ENCODE measurements at regions of chr1 and their contacts with region 1.

Region 1: DNA sequence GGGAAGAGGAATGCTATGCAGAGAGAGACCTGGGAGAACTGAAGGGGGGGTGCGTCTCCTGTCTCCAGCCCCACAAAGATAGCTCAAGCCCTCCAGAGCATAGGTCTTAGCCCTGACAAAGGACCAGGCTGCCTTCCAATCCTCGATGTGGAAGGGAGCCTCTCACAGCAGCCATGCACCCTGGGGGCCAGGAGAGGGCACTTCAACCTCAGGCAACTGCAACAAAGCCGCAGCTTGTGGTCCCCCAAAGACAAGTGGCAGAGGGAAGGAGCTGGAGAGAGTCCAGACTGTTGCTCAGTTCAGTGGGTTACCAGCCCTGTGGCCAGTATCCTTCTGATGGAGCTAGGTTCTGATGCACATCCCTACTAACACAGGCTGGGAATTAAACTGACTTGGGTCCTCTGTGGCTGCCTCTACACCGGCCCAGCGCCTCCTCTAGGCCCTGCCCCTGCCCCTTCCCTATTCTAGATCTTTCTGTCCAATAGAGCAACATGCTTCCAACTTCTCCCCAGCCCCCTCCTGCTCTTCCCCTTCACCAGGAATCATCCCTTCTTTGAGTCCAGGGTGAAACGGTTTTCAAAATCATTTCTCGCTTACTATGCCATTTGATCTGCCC is 100.8 kb upstream of the SPATA6 start:
- DNase-seq: peak; percentile 58 to 87 (median 73)
- H3K4me3 ChIP-seq: no peak overlapping the region
- H3K27ac ChIP-seq: no peak overlapping the region
- H3K4me1 ChIP-seq: peaks cover 0 to under 1% of the 10 kb centered on the region in 2 donors
- H3K27me3 ChIP-seq: no peaks in the 10 kb centered on the region
- CTCF ChIP-seq: peak; percentile 48 to 85 (median 79)
- POLR2A ChIP-seq: no peak

Region 2: GRCh38 chr1:48422009-48422408 is 150.7 kb before region 1 on chr1:
- intact Hi-C with region 1: no loop called
- DNase-seq: no peak
- H3K4me3 ChIP-seq: no peak overlapping the region
- H3K27ac ChIP-seq: no peak overlapping the region
- H3K4me1 ChIP-seq: peaks cover 4 to 28% of the 10 kb centered on the region in 2 donors
- H3K27me3 ChIP-seq: no peaks in the 10 kb centered on the region
- CTCF ChIP-seq: no peak
- POLR2A ChIP-seq: no peak

Region 3: DNA sequence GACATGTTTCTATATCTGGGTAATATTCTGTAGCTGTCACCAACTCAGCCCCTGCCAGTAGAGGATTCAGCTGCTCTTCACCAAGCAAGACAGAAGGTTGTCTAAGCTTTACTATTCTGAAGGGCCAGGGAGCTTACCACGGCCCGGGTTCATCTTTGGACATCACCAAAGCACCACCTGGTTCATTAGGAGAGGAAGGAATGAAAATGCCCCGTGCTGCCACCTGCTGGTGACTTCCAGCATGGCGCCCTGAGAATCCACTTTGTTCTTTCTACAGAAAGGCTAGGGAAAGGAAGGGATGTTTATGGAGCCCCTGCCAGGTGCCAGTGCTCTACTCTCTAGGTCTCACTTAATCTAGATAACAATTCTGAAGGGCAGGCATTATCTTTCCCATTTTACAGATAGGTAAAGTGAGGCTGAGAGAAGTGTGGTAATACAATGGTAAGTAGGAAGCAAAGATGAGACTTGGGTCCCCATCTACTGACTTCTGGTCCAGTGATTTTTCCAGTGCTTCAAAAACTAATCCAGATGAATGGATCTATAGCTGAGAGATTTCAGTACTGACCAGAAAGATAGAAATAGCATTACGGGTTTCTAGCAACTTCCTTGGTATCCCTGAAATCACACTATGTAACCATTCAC is 124.4 kb after region 1 on chr1:
- intact Hi-C with region 1: loop called (anchors 2 to 5 kb)
- DNase-seq: peak; percentile 53 to 92 (median 77)
- H3K4me3 ChIP-seq: no peak overlapping the region
- H3K27ac ChIP-seq: no peak overlapping the region
- H3K4me1 ChIP-seq: no peaks in the 10 kb centered on the region
- H3K27me3 ChIP-seq: no peaks in the 10 kb centered on the region
- CTCF ChIP-seq: peak; percentile 73 to 95 (median 82)
- POLR2A ChIP-seq: no peak

Region 4: GRCh38 chr1:48817505-48818114 is 244.9 kb after region 1 on chr1:
- intact Hi-C with region 1: loop called (anchors 5 kb)
- DNase-seq: peak; percentile 68 to 90 (median 77)
- H3K4me3 ChIP-seq: no peak overlapping the region
- H3K27ac ChIP-seq: no peak overlapping the region
- H3K4me1 ChIP-seq: no peaks in the 10 kb centered on the region
- H3K27me3 ChIP-seq: no peaks in the 10 kb centered on the region
- CTCF ChIP-seq: peak; percentile 58 to 86 (median 74)
- POLR2A ChIP-seq: no peak

Region 5: GRCh38 chr1:49171941-49172593 is 599.3 kb after region 1 on chr1:
- intact Hi-C with region 1: no loop called
- DNase-seq: no peak
- H3K4me3 ChIP-seq: no peak overlapping the region
- H3K27ac ChIP-seq: no peak overlapping the region
- H3K4me1 ChIP-seq: no peaks in the 10 kb centered on the region
- H3K27me3 ChIP-seq: no peaks in the 10 kb centered on the region
- CTCF ChIP-seq: no peak
- POLR2A ChIP-seq: no peak

Measured in adrenal gland (tissue), 19 donors.